ENCODE measurements at regions of chr6 and their contacts with region 1.

Region 1: GRCh38 chr6:46090115-46091079 is 39.4 kb upstream of the ENPP4 start:
- DNase-seq: peak; percentile 61
- H3K4me3 ChIP-seq: no peak overlapping the region
- H3K27ac ChIP-seq: no peak overlapping the region
- H3K4me1 ChIP-seq: no peaks in the 10 kb centered on the region
- H3K27me3 ChIP-seq: no peaks in the 10 kb centered on the region
- CTCF ChIP-seq: peak; percentile 67

Region 2: DNA sequence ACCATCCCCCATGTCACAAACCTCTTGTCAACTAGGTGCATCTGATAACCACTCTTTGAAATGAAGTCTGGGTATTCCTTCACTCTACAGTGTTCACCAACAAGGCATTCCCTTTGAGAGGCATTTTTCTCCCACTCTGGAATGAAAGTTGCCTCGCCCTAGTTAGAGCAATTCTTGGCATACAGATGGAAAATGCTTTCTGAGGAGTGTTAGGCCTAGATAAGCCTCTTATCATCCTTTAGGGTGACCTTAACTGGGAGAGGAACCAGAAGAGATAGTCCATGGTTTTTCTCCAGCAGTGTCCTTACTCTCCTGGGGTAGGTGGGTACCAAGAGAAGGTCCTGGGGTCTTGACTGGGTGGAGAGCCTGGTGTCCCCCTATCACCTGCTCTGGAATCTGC is 89.5 kb before region 1 on chr6:
- intact Hi-C with region 1: no loop called
- DNase-seq: no peak
- H3K4me3 ChIP-seq: no peak overlapping the region
- H3K27ac ChIP-seq: no peak overlapping the region
- H3K4me1 ChIP-seq: no peaks in the 10 kb centered on the region
- H3K27me3 ChIP-seq: no peaks in the 10 kb centered on the region
- CTCF ChIP-seq: no peak

Region 3: GRCh38 chr6:46410334-46410953 is 320.0 kb after region 1 on chr6:
- intact Hi-C with region 1: loop called (anchors 5 kb)
- DNase-seq: peak; percentile 36
- H3K4me3 ChIP-seq: no peak overlapping the region
- H3K27ac ChIP-seq: no peak overlapping the region
- H3K4me1 ChIP-seq: no peaks in the 10 kb centered on the region
- H3K27me3 ChIP-seq: no peaks in the 10 kb centered on the region
- CTCF ChIP-seq: peak; percentile 55

Measured in colonic mucosa (tissue), 4 donors.